ENCODE measurements at regions of chr3 and their contacts with region 1.

Region 1: GRCh38 chr3:193974671-193975535 is 161.0 kb upstream of the HES1 start:
- DNase-seq: no peak
- H3K4me3 ChIP-seq: no peak overlapping the region
- H3K27ac ChIP-seq: no peak overlapping the region
- H3K4me1 ChIP-seq: peaks cover 0 to 25% (median 4%) of the 10 kb centered on the region in 4 donors
- H3K27me3 ChIP-seq: peaks cover 0 to 37% of the 10 kb centered on the region in 2 donors
- CTCF ChIP-seq: no peak

Region 2: GRCh38 chr3:194003125-194004057 is 28.5 kb after region 1 on chr3:
- intact Hi-C with region 1: no loop called
- DNase-seq: peak; percentile 96 to 98
- H3K4me3 ChIP-seq: peak overlapping the region; percentile 36 to 48
- H3K27ac ChIP-seq: peak overlapping the region; percentile 60 to 85
- H3K4me1 ChIP-seq: peaks cover 5 to 28% (median 19%) of the 10 kb centered on the region in 4 donors
- H3K27me3 ChIP-seq: peaks cover 0 to 22% of the 10 kb centered on the region in 2 donors
- CTCF ChIP-seq: no peak

Region 3: DNA sequence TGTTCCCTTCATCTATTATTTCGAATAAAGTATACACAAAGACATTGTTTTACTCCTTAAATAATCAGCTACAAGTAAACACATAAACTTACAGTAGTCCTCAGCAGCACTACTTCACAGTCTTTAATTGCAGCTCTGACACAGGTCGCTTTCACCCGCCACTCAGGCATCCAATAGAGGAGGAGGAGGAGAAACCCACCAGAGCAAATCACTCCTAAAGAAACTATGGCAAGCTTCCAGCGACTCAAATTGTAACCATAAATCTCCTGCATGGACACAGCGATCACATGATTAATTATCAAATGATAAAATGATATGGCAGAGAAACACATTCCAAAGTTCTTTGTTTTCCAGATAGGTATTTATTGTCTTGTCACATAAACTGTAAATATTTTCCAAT is 485.7 kb after region 1 on chr3:
- intact Hi-C with region 1: loop called (anchors 5 kb)
- DNase-seq: no peak
- H3K4me3 ChIP-seq: no peak overlapping the region
- H3K27ac ChIP-seq: no peak overlapping the region
- H3K4me1 ChIP-seq: peaks cover 0 to 12% (median under 1%) of the 10 kb centered on the region in 4 donors
- H3K27me3 ChIP-seq: no peaks in the 10 kb centered on the region
- CTCF ChIP-seq: no peak